ENCODE measurements at regions of chr16 and their contacts with region 1.

Region 1: GRCh38 chr16:2752035-2752849 is at the start of gene SRRM2:
- DNase-seq: peak; percentile 97
- total RNA-seq, gene SRRM2: 335 TPM

Region 2: GRCh38 chr16:2512703-2513404 is 239.4 kb before region 1 on chr16:
- intact Hi-C with region 1: no loop called
- DNase-seq: no peak

Region 3: GRCh38 chr16:2720719-2721633 is 31.3 kb before region 1 on chr16:
- intact Hi-C with region 1: loop called (anchors 2 kb)
- DNase-seq: peak; percentile 87

Region 4: GRCh38 chr16:2777231-2777902 is 25.1 kb after region 1 on chr16 and contains the start of gene ELOB:
- intact Hi-C with region 1: loop called (anchors 2 kb)
- DNase-seq: peak; percentile 95
- total RNA-seq, gene ELOB: 278 TPM

Region 5: DNA sequence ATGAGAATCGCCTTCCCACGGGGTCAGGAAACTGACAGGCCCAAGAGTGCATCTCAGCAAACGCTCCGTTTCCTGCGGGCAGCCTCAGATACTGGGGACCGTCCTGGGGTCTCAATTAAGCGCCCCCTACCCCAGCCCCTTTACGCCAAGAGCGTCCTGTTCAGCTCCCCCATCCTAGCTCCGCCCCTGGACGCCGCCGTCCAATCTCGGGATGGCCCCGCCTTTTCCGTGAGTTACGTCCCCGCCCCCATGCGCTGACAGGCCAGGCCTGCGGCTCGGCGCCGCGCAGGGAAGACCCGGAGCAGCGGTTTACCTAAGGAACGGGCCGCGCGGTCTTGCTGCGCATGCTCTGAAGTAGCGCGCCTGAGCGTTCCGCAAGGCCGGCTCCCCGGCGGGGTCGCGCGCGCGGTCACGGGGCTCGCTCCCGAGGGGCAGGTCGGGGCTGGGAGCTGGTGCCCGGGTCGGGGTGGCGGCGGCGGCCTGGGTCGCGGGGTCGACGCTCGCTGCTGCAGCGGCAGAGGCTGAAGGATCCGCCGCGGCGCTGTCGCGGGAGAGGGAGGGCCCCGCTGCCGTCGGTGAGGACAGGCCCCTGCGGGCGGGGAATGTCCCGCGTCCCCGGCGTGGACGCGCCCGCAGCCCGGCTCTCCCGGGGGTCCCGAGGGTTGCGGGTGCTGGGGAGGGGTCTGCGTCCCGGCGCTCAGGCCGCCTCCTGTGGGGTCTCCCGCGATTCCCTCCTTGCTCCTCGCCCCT is 159.5 kb after region 1 on chr16 and contains the start of gene FLYWCH1:
- intact Hi-C with region 1: loop called (anchors 5 kb)
- DNase-seq: peak; percentile 99
- total RNA-seq, gene FLYWCH1: 43.5 TPM

Region 6: GRCh38 chr16:3223913-3224515 is 471.8 kb after region 1 on chr16:
- intact Hi-C with region 1: no loop called
- DNase-seq: no peak

Measured in cardiac septum (tissue), 1 donor.